Prostate gland (tissue), 2 donors: ENCODE measurements at regions of chr14 and their contacts with region 1.

Region 1: GRCh38 chr14:54566410-54567223 is at the start of gene SAMD4A:
- DNase-seq: peak; percentile 73
- H3K4me3 ChIP-seq: peak within 1 kb of the TSS; percentile 65 to 66
- H3K27ac ChIP-seq: peak within 1 kb of the TSS; percentile 93 to 97
- H3K4me1 ChIP-seq: no peaks in the 10 kb centered on the region
- H3K27me3 ChIP-seq: no peaks in the 10 kb centered on the region
- CTCF ChIP-seq: peak in 2 of 4 experiments; percentile 27 to 42
- POLR2A ChIP-seq: peak; percentile 44
- total RNA-seq, gene SAMD4A: 18.1 to 38.5 TPM

Region 2: DNA sequence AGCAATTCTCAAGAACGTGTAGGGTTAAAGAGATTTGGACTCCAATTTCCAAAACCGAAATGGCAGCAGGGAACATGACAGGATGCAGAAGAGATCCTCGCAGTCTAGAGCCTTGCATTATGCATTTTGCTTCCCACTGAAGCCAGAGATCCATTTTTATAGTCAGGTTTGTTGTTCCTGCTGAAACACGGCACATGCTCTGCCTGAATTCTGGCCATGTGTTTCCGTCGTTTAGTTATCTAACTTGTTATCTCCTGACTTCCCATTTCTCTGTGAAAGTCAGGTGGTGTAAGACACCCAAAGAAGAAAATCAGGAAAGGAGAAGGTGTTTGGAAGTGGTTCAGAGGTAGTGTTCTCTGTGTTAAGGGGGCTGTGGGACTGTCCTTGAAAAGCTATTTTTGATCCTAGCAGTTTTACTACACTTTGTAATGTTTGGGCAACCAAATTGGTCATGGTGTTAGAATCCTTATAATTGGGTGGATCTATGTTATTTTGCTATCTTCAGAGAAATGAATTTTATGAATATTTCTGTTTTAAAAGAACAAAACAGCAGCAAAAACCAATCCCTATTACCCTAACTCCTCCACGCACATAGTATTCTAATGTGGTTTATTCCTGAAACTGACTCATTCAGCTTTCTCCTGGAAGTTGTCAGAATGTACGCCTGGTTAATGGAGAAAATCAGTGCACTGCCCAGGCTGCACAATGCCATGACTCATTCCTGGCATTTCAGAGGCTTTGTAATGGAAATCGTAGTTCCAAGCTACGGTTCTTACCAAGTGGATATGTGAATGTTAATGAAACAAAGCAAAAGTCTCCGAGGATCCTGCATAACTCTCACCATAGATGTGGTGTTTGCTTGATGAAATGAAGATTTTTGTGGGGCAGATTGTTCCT is 110.4 kb after region 1 on chr14:
- intact Hi-C with region 1: loop called (anchors 2 kb)
- DNase-seq: no peak
- H3K4me3 ChIP-seq: no peak overlapping the region
- H3K27ac ChIP-seq: peak overlapping the region; percentile 63 to 73
- H3K4me1 ChIP-seq: peaks cover 7% of the 10 kb centered on the region
- H3K27me3 ChIP-seq: no peaks in the 10 kb centered on the region
- CTCF ChIP-seq: no peak
- POLR2A ChIP-seq: peak; percentile 7

Region 3: DNA sequence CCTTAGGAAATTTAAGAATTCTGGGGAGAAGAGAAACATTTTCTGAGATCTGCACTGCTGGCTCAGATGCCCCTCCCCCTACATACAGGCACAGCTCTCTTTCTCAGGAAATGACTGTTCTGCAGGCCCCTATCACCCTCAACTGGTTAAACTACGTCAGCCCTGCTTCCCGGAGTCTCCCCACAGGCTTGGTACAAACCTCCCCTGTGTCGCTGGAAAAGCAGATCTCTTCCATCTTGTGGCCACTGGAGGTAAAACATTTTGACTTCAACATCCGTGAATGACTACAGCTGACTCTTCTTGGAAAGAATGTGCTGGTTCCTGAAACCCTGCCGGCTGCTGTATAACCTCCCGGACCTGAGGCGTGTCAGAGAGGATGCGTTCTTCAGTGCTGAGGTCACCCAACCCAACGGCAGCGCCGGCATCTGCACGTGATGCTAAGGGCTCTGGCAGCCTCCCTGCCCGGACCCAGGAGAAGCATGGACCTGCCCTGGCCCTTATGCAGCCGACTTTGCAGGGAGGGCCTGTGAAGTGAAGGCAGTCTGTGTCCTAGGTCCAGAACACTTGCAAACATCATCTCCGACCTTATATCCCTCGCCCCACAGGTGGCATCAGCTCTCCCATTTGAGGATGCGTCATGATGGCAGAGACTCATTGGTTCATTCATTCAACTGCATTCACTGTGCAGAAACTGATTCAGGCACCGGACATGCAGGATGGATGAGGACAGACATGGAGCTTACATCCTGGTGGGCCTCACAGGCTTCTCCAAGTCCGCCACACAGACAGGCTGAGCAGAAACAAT is 206.8 kb after region 1 on chr14:
- intact Hi-C with region 1: loop called (anchors 1 kb)
- DNase-seq: peak; percentile 70
- H3K4me3 ChIP-seq: no peak overlapping the region
- H3K27ac ChIP-seq: peak overlapping the region; percentile 67 to 78
- H3K4me1 ChIP-seq: no peaks in the 10 kb centered on the region
- H3K27me3 ChIP-seq: no peaks in the 10 kb centered on the region
- CTCF ChIP-seq: peak; percentile 38 to 77 (median 58)
- POLR2A ChIP-seq: peak; percentile 2

Region 4: GRCh38 chr14:54805521-54806322 is 239.1 kb after region 1 on chr14:
- intact Hi-C with region 1: loop called (anchors 2 kb)
- DNase-seq: peak; percentile 69
- H3K4me3 ChIP-seq: no peak overlapping the region
- H3K27ac ChIP-seq: no peak overlapping the region
- H3K4me1 ChIP-seq: no peaks in the 10 kb centered on the region
- H3K27me3 ChIP-seq: no peaks in the 10 kb centered on the region
- CTCF ChIP-seq: peak; percentile 75 to 86 (median 82)
- POLR2A ChIP-seq: no peak